ENCODE measurements at regions of chr14 and their contacts with region 1.

Region 1: GRCh38 chr14:89915114-89915878 is 39.2 kb downstream of the EFCAB11 start:
- DNase-seq: peak; percentile 23
- H3K4me3 ChIP-seq: no peak overlapping the region
- H3K27ac ChIP-seq: no peak overlapping the region
- H3K4me1 ChIP-seq: peaks cover 6% of the 10 kb centered on the region
- H3K27me3 ChIP-seq: no peaks in the 10 kb centered on the region
- CTCF ChIP-seq: peak; percentile 98

Region 2: DNA sequence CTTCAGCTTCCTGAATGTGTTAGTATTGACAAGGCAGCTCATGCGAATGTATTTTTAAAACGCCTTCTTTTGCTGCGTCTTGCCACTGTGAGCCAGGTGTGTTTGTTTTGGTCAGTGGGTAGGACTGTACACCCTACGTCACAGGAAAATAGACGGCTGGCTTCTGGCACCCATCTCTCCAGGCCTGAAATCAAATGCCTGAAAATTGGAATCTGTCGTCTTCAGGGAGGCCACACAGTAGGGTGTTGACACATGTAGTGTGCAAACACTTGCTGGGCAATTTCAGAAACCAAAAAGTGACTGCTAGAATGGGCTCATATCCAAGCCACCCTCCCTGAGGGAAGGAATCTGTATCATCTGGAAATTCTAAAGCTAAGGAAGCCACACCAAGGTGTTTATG is 881.5 kb before region 1 on chr14:
- intact Hi-C with region 1: loop called (anchors 5 kb)
- DNase-seq: no peak
- H3K4me3 ChIP-seq: no peak overlapping the region
- H3K27ac ChIP-seq: no peak overlapping the region
- H3K4me1 ChIP-seq: no peaks in the 10 kb centered on the region
- H3K27me3 ChIP-seq: peaks cover 48% of the 10 kb centered on the region
- CTCF ChIP-seq: no peak

Region 3: GRCh38 chr14:89040460-89041259 is 874.6 kb before region 1 on chr14:
- intact Hi-C with region 1: loop called (anchors 5 kb)
- DNase-seq: peak; percentile 88
- H3K4me3 ChIP-seq: peak overlapping the region; percentile 66
- H3K27ac ChIP-seq: peak overlapping the region; percentile 86
- H3K4me1 ChIP-seq: peaks cover 9% of the 10 kb centered on the region
- H3K27me3 ChIP-seq: peaks cover 4% of the 10 kb centered on the region
- CTCF ChIP-seq: peak; percentile 96

Region 4: GRCh38 chr14:90168425-90169105 is 253.3 kb after region 1 on chr14:
- intact Hi-C with region 1: no loop called
- DNase-seq: no peak
- H3K4me3 ChIP-seq: no peak overlapping the region
- H3K27ac ChIP-seq: no peak overlapping the region
- H3K4me1 ChIP-seq: no peaks in the 10 kb centered on the region
- H3K27me3 ChIP-seq: no peaks in the 10 kb centered on the region
- CTCF ChIP-seq: no peak

Measured in left ventricle myocardium inferior (tissue), 1 donor.